Calu3 (cell line): ENCODE measurements at regions of chr3 and their contacts with region 1.

Region 1: DNA sequence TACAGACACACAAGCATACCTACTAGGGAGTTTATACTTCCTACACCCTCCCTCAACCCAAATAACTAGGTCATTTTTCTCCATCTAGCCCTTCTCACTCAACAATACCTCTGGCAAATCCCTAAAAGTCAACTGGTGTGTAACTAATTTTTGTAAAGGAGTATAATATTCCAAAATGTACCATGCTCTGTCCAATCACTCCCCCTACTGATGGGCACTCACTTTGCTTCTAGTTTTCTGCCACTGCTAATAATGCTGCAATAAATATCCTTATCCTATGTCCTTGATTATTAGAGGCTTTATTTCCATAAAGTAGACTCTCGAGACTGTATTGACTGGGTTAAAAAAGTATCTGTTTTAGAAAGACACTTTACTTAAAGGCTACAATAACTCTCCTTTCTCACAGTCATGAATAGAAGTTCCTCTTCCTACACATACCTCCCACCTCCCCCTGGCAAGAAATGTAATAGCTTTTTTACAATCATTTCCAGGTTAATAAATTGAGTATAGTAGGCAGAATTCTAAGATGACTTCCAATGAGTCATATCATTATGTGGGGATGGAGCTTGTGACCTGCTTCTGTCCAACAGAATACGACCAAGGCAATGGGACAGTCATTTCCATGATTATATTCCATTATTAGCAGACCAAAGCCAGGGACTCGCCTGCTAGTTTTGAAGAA is 30.0 kb downstream of the SHQ1 start:
- DNase-seq: peak; percentile 15
- H3K4me3 Mint-ChIP-seq: no peak overlapping the region
- H3K27ac Mint-ChIP-seq: no peak overlapping the region
- H3K4me1 Mint-ChIP-seq: no peaks in the 10 kb centered on the region
- H3K27me3 Mint-ChIP-seq: no peaks in the 10 kb centered on the region
- CTCF ChIP-seq: peak; percentile 23

Region 2: DNA sequence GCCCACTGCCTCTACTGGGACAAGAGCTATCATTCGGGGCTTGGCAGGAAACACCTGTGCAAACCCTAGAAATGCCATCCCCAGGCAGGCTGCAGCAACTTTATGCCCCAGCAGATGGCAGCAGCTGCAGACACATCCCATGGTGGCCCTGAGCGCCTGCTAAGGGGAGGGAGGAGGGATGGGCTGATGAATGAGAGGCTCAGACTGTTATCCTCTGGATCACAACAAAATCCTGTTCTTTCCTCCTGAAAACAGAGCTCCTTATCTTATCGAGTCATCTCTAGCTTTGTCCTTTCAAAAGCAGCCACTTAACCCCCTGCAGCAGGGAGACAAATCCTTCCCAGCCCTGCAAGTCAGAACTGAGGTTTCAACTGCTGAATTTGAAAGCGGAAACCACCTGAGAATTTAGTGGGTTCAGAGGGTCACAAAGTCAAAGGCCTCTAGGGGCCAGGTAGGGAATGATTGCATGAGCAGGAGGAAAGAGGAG is 942.7 kb before region 1 on chr3:
- CTCF ChIA-PET with region 1: interaction called, 5 read pairs
- intact Hi-C with region 1: loop called (anchors 2 kb)
- DNase-seq: peak; percentile 80
- H3K4me3 Mint-ChIP-seq: no peak overlapping the region
- H3K27ac Mint-ChIP-seq: no peak overlapping the region
- H3K4me1 Mint-ChIP-seq: peaks cover 2% of the 10 kb centered on the region
- H3K27me3 Mint-ChIP-seq: no peaks in the 10 kb centered on the region
- CTCF ChIP-seq: peak; percentile 60

Region 3: GRCh38 chr3:71926262-71926600 is 892.0 kb before region 1 on chr3:
- CTCF ChIA-PET with region 1: interaction called, 8 read pairs
- intact Hi-C with region 1: loop called (anchors 1 kb)
- DNase-seq: peak; percentile 65
- H3K4me3 Mint-ChIP-seq: no peak overlapping the region
- H3K27ac Mint-ChIP-seq: no peak overlapping the region
- H3K4me1 Mint-ChIP-seq: peaks cover 9% of the 10 kb centered on the region
- H3K27me3 Mint-ChIP-seq: peaks cover 37% of the 10 kb centered on the region
- CTCF ChIP-seq: peak; percentile 30

Region 4: GRCh38 chr3:71955240-71956068 is 862.8 kb before region 1 on chr3:
- CTCF ChIA-PET with region 1: interaction called, 9 read pairs
- intact Hi-C with region 1: loop called (anchors 1 kb)
- DNase-seq: peak; percentile 64
- H3K4me3 Mint-ChIP-seq: no peak overlapping the region
- H3K27ac Mint-ChIP-seq: no peak overlapping the region
- H3K4me1 Mint-ChIP-seq: no peaks in the 10 kb centered on the region
- H3K27me3 Mint-ChIP-seq: peaks cover 55% of the 10 kb centered on the region
- CTCF ChIP-seq: peak; percentile 50

Region 5: DNA sequence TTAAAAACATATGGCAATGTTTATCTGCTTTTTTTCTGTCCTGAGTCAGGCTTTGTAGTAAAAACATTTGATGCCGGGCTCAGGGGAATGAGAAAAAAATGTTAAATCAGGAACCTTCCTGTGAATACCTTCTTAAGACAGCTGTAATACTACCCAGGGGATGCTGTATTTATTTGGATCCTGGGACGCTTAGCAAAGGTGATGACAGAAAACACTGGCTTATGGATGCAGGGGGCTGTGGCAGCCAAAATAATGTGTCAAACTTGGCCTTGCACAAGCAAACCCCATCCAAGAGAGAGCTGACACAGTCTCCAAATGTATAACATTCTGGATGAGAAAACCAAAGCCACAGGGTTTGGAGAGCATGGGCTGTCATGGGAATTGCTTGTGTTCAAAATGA is 595.1 kb before region 1 on chr3:
- CTCF ChIA-PET with region 1: no interaction called
- intact Hi-C with region 1: no loop called
- DNase-seq: no peak
- H3K4me3 Mint-ChIP-seq: no peak overlapping the region
- H3K27ac Mint-ChIP-seq: no peak overlapping the region
- H3K4me1 Mint-ChIP-seq: no peaks in the 10 kb centered on the region
- H3K27me3 Mint-ChIP-seq: peaks cover 23% of the 10 kb centered on the region
- CTCF ChIP-seq: no peak

Region 6: DNA sequence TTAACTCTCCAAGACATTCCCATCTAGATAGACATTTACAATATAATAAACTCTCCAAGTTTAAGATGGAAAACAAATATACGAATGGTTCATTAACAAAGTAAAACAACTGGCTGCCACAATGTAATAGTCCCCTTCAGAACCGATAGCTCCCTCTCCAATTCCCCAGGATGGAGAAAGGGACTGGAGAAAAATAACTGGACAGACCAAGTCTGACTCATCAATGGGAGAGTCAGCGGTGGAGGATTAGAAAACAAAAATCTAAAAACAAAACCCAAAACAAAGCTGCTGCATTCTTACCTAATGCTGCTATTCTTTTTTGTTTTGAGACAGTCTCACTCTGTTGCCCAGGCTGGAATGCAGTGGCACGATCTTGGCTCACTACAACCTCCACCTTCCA is 438.0 kb before region 1 on chr3:
- CTCF ChIA-PET with region 1: no interaction called
- intact Hi-C with region 1: loop called (anchors 5 kb)
- DNase-seq: no peak
- H3K4me3 Mint-ChIP-seq: no peak overlapping the region
- H3K27ac Mint-ChIP-seq: no peak overlapping the region
- H3K4me1 Mint-ChIP-seq: peaks cover 21% of the 10 kb centered on the region
- H3K27me3 Mint-ChIP-seq: no peaks in the 10 kb centered on the region
- CTCF ChIP-seq: no peak

Region 7: GRCh38 chr3:72436863-72437592 is 381.2 kb before region 1 on chr3:
- CTCF ChIA-PET with region 1: no interaction called
- intact Hi-C with region 1: no loop called
- DNase-seq: no peak
- H3K4me3 Mint-ChIP-seq: no peak overlapping the region
- H3K27ac Mint-ChIP-seq: no peak overlapping the region
- H3K4me1 Mint-ChIP-seq: peaks cover 32% of the 10 kb centered on the region
- H3K27me3 Mint-ChIP-seq: no peaks in the 10 kb centered on the region
- CTCF ChIP-seq: no peak

Region 8: DNA sequence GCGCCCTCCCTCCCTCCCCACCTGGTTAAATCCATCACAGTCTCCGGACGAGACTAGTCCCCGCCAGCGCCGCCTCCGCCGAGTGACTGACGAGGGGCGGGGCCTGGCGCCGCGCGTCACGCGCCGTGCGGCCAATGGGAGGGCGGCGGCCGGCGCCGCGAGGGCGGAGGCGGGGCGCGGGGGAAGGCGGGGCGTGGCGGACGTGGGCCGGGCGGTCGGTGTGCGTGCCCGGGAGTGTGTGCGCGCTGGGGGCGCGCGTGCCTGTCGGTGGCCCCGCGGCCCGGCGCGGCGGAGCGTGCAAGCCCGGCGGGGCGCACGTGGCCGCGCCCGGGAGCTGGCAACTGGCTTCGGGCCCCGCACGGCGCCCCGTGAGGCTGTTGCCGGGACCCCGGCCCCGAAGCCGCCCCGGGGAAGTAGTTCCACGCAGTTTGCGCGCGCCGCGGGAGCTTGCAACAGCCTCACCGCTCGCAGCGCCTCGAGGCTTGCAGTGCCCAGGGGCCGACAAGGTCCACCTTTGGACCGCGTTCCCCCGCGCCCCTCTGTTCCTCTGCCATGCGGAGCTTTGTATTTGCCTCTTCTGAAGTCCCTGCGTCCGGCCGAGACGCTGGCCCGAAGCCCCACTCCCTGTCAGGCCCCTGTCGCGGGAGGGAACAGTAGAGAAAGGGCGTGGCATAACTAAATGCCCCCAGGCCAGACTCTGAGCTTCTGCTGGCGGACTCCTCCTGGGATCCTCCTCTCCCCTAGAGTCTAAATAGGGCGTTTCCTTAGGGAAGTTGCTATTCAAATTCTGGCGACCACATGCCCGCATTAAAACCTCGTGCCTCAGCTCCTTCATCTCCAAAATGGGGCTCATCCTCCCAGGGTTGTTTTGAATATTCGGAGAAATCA is 370.9 kb before region 1 on chr3:
- CTCF ChIA-PET with region 1: no interaction called
- intact Hi-C with region 1: loop called (anchors 5 kb)
- DNase-seq: peak; percentile 95
- H3K4me3 Mint-ChIP-seq: peak overlapping the region; percentile 78
- H3K27ac Mint-ChIP-seq: peak overlapping the region; percentile 46
- H3K4me1 Mint-ChIP-seq: peaks cover 43% of the 10 kb centered on the region
- H3K27me3 Mint-ChIP-seq: no peaks in the 10 kb centered on the region
- CTCF ChIP-seq: no peak

Region 9: GRCh38 chr3:72665701-72666443 is 152.4 kb before region 1 on chr3:
- CTCF ChIA-PET with region 1: no interaction called
- intact Hi-C with region 1: loop called (anchors 2 kb)
- DNase-seq: peak; percentile 56
- H3K4me3 Mint-ChIP-seq: no peak overlapping the region
- H3K27ac Mint-ChIP-seq: no peak overlapping the region
- H3K4me1 Mint-ChIP-seq: peaks cover 7% of the 10 kb centered on the region
- H3K27me3 Mint-ChIP-seq: peaks cover 5% of the 10 kb centered on the region
- CTCF ChIP-seq: peak; percentile 35